Endothelial cell of umbilical vein (primary cell): ENCODE measurements at regions of chr6 and their contacts with region 1.

Region 1: GRCh38 chr6:13908955-13909381 is 15.8 kb upstream of the RNF182 start:
- DNase-seq: peak; percentile 67
- H3K4me3 ChIP-seq: no peak overlapping the region
- H3K27ac ChIP-seq: no peak overlapping the region
- H3K4me1 ChIP-seq: peaks cover 6% of the 10 kb centered on the region
- H3K27me3 ChIP-seq: peaks cover 3% of the 10 kb centered on the region in 2 experiments
- CTCF ChIP-seq: peak; percentile 54 to 62
- POLR2A ChIP-seq: no peak

Region 2: GRCh38 chr6:13395272-13396237 is 513.4 kb before region 1 on chr6:
- CTCF ChIA-PET with region 1: no interaction called
- POLR2A ChIA-PET with region 1: no interaction called
- dilution Hi-C with region 1: no loop called
- intact Hi-C with region 1: no loop called
- DNase-seq: peak; percentile 100
- H3K4me3 ChIP-seq: no peak overlapping the region
- H3K27ac ChIP-seq: peak overlapping the region; percentile 92
- H3K4me1 ChIP-seq: peaks cover 19% of the 10 kb centered on the region
- H3K27me3 ChIP-seq: no peaks in the 10 kb centered on the region
- CTCF ChIP-seq: no peak
- POLR2A ChIP-seq: peak; percentile 65

Region 3: GRCh38 chr6:13795041-13795750 is 113.8 kb before region 1 on chr6:
- CTCF ChIA-PET with region 1: interaction called, 8 read pairs
- POLR2A ChIA-PET with region 1: no interaction called
- dilution Hi-C with region 1: no loop called
- intact Hi-C with region 1: loop called (anchors 1 kb)
- DNase-seq: peak; percentile 75
- H3K4me3 ChIP-seq: no peak overlapping the region
- H3K27ac ChIP-seq: peak overlapping the region; percentile 38
- H3K4me1 ChIP-seq: peaks cover 10% of the 10 kb centered on the region
- H3K27me3 ChIP-seq: no peaks in the 10 kb centered on the region
- CTCF ChIP-seq: peak; percentile 89 to 96
- POLR2A ChIP-seq: no peak

Region 4: GRCh38 chr6:13924146-13924948 is 15.4 kb after region 1 on chr6:
- CTCF ChIA-PET with region 1: interaction called, 47 read pairs
- POLR2A ChIA-PET with region 1: no interaction called
- dilution Hi-C with region 1: no loop called
- intact Hi-C with region 1: loop called (anchors 1 kb)
- DNase-seq: peak; percentile 37
- H3K4me3 ChIP-seq: peak overlapping the region; percentile 43 to 55 (median 53)
- H3K27ac ChIP-seq: no peak overlapping the region
- H3K4me1 ChIP-seq: peaks cover 17% of the 10 kb centered on the region
- H3K27me3 ChIP-seq: peaks cover 29 to 52% of the 10 kb centered on the region in 2 experiments
- CTCF ChIP-seq: no peak
- POLR2A ChIP-seq: no peak

Region 5: DNA sequence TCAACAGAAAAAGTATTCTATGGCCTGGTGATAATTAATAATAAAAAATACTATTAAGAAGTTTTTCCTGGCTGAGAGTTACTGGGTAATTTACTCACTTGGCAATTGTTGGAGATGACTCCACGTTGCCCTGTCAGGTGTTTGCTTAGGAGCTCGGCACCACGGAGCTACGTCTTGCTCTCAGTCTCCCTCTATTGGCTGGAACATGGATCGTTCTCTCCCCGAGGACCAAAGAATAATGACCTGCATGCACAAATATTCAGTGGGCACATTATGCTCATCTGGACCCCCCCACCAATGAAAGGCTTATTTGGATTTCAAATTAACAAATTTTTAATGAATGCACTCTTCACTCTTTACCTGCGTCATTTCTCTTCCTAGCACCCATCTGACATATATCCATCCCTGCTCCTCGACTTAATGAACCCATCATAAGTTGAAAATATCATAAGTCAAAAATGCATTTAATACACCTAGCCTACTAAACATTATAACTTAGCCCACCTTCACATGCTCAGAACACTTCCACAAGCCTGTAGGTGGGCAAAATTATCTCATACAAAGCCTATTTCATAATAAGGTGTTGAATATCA is 137.6 kb after region 1 on chr6:
- CTCF ChIA-PET with region 1: interaction called, 203 read pairs
- POLR2A ChIA-PET with region 1: no interaction called
- dilution Hi-C with region 1: no loop called
- intact Hi-C with region 1: loop called (anchors 1 kb)
- DNase-seq: peak; percentile 57
- H3K4me3 ChIP-seq: no peak overlapping the region
- H3K27ac ChIP-seq: no peak overlapping the region
- H3K4me1 ChIP-seq: no peaks in the 10 kb centered on the region
- H3K27me3 ChIP-seq: no peaks in the 10 kb centered on the region
- CTCF ChIP-seq: peak; percentile 63 to 79
- POLR2A ChIP-seq: no peak

Region 6: DNA sequence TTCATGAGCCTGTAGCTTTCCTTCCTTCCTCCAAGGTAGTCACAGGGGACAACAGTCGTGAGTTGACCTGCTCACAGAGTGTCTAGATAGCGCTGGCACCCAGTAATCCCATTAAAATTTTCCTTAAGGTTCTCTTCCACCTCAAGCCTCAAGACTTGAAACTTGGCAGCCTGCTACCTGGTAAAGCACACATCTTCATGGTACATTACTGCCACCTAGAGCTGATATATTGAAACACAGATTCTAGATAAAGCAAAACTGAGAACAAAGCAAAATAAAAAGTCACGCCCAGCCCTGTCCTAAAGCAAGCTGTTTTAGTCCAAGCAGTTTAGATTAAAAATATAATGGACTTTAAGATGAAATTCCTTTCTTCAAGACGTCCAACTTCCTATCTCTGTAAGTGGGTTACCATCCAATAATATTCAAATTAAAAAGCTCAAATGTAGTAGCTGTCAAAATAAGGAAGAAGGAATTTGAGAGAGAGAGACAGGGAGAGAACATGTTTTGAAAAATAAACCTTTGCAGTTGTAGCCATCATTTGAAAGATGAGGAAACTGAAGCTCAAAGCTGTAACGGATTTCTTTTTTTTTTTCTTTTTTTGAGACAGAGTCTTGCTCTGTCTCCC is 157.9 kb after region 1 on chr6:
- CTCF ChIA-PET with region 1: interaction called, 188 read pairs
- POLR2A ChIA-PET with region 1: no interaction called
- dilution Hi-C with region 1: no loop called
- intact Hi-C with region 1: loop called (anchors 1 kb)
- DNase-seq: peak; percentile 61
- H3K4me3 ChIP-seq: no peak overlapping the region
- H3K27ac ChIP-seq: no peak overlapping the region
- H3K4me1 ChIP-seq: no peaks in the 10 kb centered on the region
- H3K27me3 ChIP-seq: peaks cover 5 to 18% of the 10 kb centered on the region in 2 experiments
- CTCF ChIP-seq: peak; percentile 47 to 52
- POLR2A ChIP-seq: no peak

Region 7: DNA sequence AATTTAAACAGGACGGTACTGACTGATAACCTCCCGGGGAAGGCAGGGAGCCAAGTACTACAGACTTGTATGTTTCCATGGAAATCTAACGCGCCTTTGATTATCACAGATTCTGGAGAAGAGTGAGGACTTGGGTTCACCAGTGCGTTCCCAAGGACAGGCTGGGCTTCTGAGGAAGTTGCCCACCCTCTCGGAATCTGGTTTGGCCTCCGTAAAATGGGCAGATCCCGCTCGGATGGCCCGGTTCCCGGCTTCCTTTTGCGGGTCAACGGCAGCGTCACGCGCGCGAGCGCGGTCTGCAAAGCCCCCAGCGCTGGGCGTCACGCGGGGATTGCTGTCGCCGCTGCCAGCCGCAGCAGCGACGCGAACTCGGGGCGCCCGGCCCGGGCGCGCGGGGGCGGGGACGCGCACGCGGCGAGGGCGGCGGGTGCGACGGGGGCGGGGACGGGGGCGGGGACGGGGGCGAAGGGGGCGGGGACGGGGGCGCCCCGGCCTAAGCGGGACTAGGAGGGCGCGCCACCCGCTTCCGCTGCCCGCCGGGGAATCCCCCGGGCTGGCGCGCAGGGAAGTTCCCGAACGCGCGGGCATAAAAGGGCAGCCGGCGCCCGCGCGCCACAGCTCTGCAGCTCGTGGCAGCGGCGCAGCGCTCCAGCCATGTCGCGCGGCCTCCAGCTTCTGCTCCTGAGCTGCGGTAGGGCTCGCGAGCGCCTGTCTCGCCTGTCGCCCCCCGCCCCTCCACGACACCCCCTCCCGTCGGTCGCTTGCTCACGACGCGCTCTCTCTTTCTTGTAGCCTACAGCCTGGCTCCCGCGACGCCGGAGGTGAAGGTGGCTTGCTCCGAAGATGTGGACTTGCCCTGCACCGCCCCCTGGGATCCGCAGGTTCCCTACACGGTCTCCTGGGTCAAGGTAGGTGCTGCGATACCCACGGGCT is 208.5 kb after region 1 on chr6 and contains the start of gene CD83:
- CTCF ChIA-PET with region 1: no interaction called
- POLR2A ChIA-PET with region 1: no interaction called
- dilution Hi-C with region 1: no loop called
- intact Hi-C with region 1: no loop called
- DNase-seq: peak; percentile 51
- H3K4me3 ChIP-seq: peak within 1 kb of the TSS; percentile 22 to 54 (median 51)
- H3K27ac ChIP-seq: no peak within 1 kb of the TSS
- H3K4me1 ChIP-seq: peaks cover 5% of the 10 kb centered on the region
- H3K27me3 ChIP-seq: peaks cover 0 to 3% of the 10 kb centered on the region in 2 experiments
- CTCF ChIP-seq: no peak
- POLR2A ChIP-seq: no peak
- total RNA-seq, gene CD83: 0.46 and 0.55 TPM in 2 replicates

Region 8: DNA sequence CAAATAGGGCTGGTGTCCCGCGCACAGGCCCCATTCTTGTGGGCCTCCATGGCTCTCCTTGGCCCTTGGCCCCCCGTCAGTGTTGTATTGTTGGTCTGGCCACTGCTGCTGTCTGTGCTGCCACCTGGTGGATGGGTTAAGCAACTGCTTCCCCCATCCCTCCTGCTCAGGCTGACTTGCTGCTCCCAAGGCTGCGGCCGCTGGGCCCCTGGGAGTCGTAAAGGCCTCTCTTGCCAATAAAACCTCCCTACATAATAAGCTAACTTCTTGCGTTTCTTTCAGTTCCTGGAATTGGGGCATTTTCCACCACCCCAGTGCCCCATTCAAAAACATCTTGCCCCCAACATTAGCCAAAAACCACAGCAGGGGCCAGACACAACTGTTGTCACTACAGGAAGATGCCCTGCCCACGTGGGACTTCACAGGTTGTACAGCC is 235.7 kb after region 1 on chr6:
- CTCF ChIA-PET with region 1: interaction called, 98 read pairs
- POLR2A ChIA-PET with region 1: no interaction called
- dilution Hi-C with region 1: no loop called
- intact Hi-C with region 1: loop called (anchors 1 kb)
- DNase-seq: peak; percentile 68
- H3K4me3 ChIP-seq: no peak overlapping the region
- H3K27ac ChIP-seq: no peak overlapping the region
- H3K4me1 ChIP-seq: no peaks in the 10 kb centered on the region
- H3K27me3 ChIP-seq: no peaks in the 10 kb centered on the region
- CTCF ChIP-seq: peak; percentile 85 to 94
- POLR2A ChIP-seq: no peak